ENCODE measurements at regions of chr19 and their contacts with region 1.

Region 1: GRCh38 chr19:51016798-51017683 is 2.5 kb downstream of the KLK10 start:
- DNase-seq: peak; percentile 75 to 98
- H3K4me3 ChIP-seq: peak overlapping the region; percentile 53 to 73 (median 62)
- H3K27ac ChIP-seq: no peak overlapping the region
- H3K4me1 ChIP-seq: peaks cover 0 to 7% (median 2%) of the 10 kb centered on the region in 4 experiments; a peak in 4 of 7 replicates
- H3K27me3 ChIP-seq: peaks cover 0 to 30% (median 19%) of the 10 kb centered on the region in 4 experiments; a peak in 5 of 7 replicates
- CTCF ChIP-seq: peak; percentile 89 to 95 (median 92)
- EP300 ChIP-seq: no peak
- POLR2A ChIP-seq: 0 out of 3 replicates have a peak, but pooled peaks of 1 of the 2 experiments have one; percentile 21
- RAD21 ChIP-seq: peak; percentile 82 to 88

Region 2: GRCh38 chr19:50804420-50805272 is 212.4 kb before region 1 on chr19:
- CTCF ChIA-PET with region 1: interaction called, 3 read pairs
- POLR2A ChIA-PET with region 1: interaction called, 12 read pairs
- DNase-seq: peak; percentile 96 to 98
- H3K4me3 ChIP-seq: peak overlapping the region; percentile 88 to 99 (median 97)
- H3K27ac ChIP-seq: peak overlapping the region; percentile 100
- H3K4me1 ChIP-seq: peaks cover 0 to 11% (median 5%) of the 10 kb centered on the region in 4 experiments; a peak in 5 of 7 replicates
- H3K27me3 ChIP-seq: peaks cover 0 to 4% (median 3%) of the 10 kb centered on the region in 4 experiments; a peak in 3 of 7 replicates
- CTCF ChIP-seq: no peak
- EP300 ChIP-seq: no peak; a peak in 1 of 3 replicates
- POLR2A ChIP-seq: peak; percentile 98 to 99
- RAD21 ChIP-seq: peak in 1 of 2 experiments; percentile 0; a peak in 1 of 4 replicates

Region 3: GRCh38 chr19:50922317-50922853 is 94.7 kb before region 1 on chr19:
- CTCF ChIA-PET with region 1: interaction called, 36 read pairs
- POLR2A ChIA-PET with region 1: no interaction called
- DNase-seq: peak; percentile 59 to 87
- H3K4me3 ChIP-seq: 0 out of 8 replicates have a peak overlapping the region, but pooled peaks of 1 of the 4 experiments have one; percentile 0
- H3K27ac ChIP-seq: no peak overlapping the region
- H3K4me1 ChIP-seq: peaks cover 0 to 7% (median 5%) of the 10 kb centered on the region in 4 experiments; a peak in 5 of 7 replicates
- H3K27me3 ChIP-seq: 0 out of 7 replicates have a peak, but pooled peaks cover 0 to 2% (median 0%) of the 10 kb centered on the region in 4 experiments
- CTCF ChIP-seq: peak; percentile 83 to 98 (median 90)
- EP300 ChIP-seq: no peak
- POLR2A ChIP-seq: no peak
- RAD21 ChIP-seq: peak; percentile 96 to 98

Region 4: DNA sequence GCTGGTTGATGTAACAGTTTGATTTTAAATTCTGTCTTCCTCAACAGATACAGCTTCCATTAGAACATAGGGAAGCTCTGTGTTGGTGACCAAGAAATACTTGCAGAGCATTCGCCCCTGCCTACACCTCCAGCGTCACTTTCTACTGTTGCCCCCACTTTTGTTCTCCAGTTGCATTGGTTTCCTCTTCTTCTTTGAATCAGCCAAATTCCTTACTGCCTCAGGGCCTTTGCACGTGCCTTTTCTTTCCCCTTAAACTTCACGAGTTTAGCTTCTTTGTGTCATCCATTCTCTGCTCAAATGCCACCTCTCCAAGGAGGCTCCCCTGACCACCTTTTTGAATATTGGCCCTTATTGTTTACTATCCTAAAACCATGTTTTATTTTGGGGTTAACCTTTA is 69.9 kb before region 1 on chr19:
- CTCF ChIA-PET with region 1: interaction called, 12 read pairs
- POLR2A ChIA-PET with region 1: interaction called, 4 read pairs
- DNase-seq: no peak
- H3K4me3 ChIP-seq: no peak overlapping the region
- H3K27ac ChIP-seq: no peak overlapping the region
- H3K4me1 ChIP-seq: peaks cover 0 to 2% (median 0%) of the 10 kb centered on the region in 4 experiments; a peak in 1 of 7 replicates
- H3K27me3 ChIP-seq: peaks cover 0 to 3% (median 0%) of the 10 kb centered on the region in 4 experiments; a peak in 1 of 7 replicates
- CTCF ChIP-seq: no peak
- EP300 ChIP-seq: no peak
- POLR2A ChIP-seq: no peak
- RAD21 ChIP-seq: no peak

Region 5: DNA sequence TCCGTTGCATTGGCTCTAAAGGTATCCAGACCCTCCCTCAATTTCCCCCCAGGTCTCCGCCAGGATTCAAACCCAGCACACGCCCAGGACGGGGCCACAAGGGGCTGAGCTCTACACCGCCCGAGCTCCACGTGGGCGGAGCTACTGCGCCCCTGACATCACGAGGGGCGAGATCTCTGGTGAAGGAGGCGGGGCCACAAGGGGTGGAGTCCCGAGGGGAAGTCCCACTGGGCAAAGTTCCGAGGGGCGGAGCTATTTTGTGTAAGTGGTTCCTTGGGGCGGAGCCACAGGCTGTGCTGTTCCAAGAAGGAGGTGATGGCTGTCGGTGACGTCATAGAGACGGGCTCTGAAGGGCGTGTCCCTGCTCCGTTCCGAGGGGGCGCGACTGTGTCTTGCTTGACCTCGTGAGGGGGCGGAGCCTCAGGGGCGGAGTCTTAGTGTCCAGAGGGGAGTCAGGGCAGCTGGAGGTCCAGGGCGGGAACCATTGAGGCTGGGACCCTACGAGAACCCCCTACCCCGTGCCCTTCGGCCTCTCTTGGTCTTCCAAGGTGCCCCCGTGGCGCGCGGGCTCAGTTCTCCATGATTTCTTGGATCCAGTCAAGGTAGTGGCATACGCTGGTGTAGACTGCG is 14.4 kb before region 1 on chr19:
- CTCF ChIA-PET with region 1: interaction called, 19 read pairs
- POLR2A ChIA-PET with region 1: interaction called, 7 read pairs
- DNase-seq: peak; percentile 79 to 83
- H3K4me3 ChIP-seq: peak overlapping the region in 2 of 4 experiments; percentile 8 to 29; a peak in 2 of 8 replicates
- H3K27ac ChIP-seq: no peak overlapping the region
- H3K4me1 ChIP-seq: peaks cover 0 to 18% (median 6%) of the 10 kb centered on the region in 4 experiments; a peak in 6 of 7 replicates
- H3K27me3 ChIP-seq: no peaks in the 10 kb centered on the region; a peak in 1 of 7 replicates
- CTCF ChIP-seq: no peak
- EP300 ChIP-seq: no peak
- POLR2A ChIP-seq: no peak
- RAD21 ChIP-seq: no peak

Region 6: DNA sequence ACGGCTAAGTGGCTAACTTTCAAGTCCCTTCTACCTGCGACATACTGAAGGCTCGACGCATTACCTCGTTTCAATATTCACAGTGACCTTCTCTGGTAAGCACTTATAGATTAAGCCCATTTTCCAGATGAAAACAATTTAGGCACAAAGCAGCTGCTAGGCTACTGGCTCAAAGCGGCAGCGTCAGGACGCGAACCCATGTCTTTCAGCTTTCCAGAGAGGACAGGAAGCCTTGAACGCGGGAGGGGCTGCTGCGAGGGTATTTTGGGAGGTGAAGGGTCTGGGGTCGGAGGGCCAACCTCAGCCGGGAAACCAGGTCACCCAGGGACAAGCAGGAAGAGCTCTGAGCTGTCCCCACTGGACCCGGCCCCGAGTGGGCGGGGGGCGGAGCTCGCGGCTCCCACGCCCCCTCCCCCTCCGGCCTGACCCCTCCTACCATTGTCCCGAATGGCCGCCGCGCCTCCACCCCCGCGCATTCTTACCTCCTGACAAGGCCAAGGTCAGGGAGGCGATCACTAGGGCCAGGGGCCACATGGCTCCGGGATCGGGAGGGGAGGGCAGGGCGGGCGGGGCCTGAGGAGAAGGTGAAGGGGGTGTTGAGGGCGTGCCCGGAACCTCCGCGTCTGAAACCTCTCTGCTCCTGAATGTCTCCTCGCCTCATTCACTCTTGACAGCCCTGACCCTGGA is 47.6 kb after region 1 on chr19 and contains the start of gene KLK13:
- CTCF ChIA-PET with region 1: interaction called, 12 read pairs
- POLR2A ChIA-PET with region 1: interaction called, 6 read pairs
- DNase-seq: peak; percentile 50 to 69
- H3K4me3 ChIP-seq: peak within 1 kb of the TSS; percentile 55 to 64 (median 62)
- H3K27ac ChIP-seq: no peak within 1 kb of the TSS
- H3K4me1 ChIP-seq: peaks cover 0 to 9% (median 1%) of the 10 kb centered on the region in 4 experiments; a peak in 4 of 7 replicates
- H3K27me3 ChIP-seq: no peaks in the 10 kb centered on the region; a peak in 2 of 7 replicates
- CTCF ChIP-seq: no peak
- EP300 ChIP-seq: no peak
- POLR2A ChIP-seq: no peak
- RAD21 ChIP-seq: no peak
- total RNA-seq, gene KLK13: 4.2 and 5.0 TPM in 2 replicates

Region 7: DNA sequence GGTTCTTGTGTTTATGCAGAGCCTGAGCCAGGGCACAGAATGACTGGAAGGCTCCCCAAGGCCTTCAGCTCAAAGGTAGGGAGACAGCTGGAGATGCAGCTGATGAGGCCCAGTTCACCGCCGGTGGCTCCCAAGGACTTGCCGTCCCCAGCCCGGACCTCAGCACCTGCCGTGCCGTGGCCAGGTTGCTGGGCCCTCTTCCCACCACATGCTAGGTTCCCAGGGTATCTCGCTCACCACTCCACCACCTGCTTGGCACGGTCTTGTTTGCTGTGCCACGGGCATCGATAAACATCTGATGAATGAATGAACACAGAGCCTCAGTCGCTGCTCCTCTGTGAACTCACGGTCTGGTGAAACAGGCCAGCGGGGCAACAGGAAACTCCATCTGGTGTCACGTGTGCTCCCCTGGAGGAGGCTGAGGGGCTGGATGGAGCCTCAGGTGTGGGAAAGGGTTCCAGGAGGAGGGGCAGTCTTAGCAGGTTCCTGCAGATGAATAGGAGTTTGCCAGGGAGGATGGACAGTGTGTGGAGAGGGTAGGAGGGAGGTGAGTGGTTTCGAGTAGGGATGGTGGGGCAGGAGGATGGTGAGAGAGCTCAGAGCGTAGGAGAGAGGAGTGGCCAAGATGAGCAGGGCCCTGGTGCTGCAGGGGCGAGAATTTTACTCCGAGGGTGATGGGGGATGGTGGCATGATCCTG is 69.3 kb after region 1 on chr19:
- CTCF ChIA-PET with region 1: interaction called, 269 read pairs
- POLR2A ChIA-PET with region 1: no interaction called
- DNase-seq: no peak
- H3K4me3 ChIP-seq: no peak overlapping the region
- H3K27ac ChIP-seq: no peak overlapping the region
- H3K4me1 ChIP-seq: peaks cover 0 to 4% (median 2%) of the 10 kb centered on the region in 4 experiments; a peak in 2 of 7 replicates
- H3K27me3 ChIP-seq: no peaks in the 10 kb centered on the region
- CTCF ChIP-seq: no peak
- EP300 ChIP-seq: no peak
- POLR2A ChIP-seq: no peak
- RAD21 ChIP-seq: no peak